Activated CD4-positive, alpha-beta memory T cell treated with anti-CD3 and anti-CD28 coated beads for 36 hours (primary cell): ENCODE measurements at regions of chr6 and their contacts with region 1.

Region 1: GRCh38 chr6:34182751-34183531 is 37.1 kb upstream of the GRM4 start:
- DNase-seq: peak; percentile 87
- H3K4me3 Mint-ChIP-seq: peak overlapping the region; percentile 65
- H3K27ac Mint-ChIP-seq: peak overlapping the region; percentile 81
- H3K4me1 Mint-ChIP-seq: peaks cover 16% of the 10 kb centered on the region
- H3K27me3 Mint-ChIP-seq: no peaks in the 10 kb centered on the region

Region 2: DNA sequence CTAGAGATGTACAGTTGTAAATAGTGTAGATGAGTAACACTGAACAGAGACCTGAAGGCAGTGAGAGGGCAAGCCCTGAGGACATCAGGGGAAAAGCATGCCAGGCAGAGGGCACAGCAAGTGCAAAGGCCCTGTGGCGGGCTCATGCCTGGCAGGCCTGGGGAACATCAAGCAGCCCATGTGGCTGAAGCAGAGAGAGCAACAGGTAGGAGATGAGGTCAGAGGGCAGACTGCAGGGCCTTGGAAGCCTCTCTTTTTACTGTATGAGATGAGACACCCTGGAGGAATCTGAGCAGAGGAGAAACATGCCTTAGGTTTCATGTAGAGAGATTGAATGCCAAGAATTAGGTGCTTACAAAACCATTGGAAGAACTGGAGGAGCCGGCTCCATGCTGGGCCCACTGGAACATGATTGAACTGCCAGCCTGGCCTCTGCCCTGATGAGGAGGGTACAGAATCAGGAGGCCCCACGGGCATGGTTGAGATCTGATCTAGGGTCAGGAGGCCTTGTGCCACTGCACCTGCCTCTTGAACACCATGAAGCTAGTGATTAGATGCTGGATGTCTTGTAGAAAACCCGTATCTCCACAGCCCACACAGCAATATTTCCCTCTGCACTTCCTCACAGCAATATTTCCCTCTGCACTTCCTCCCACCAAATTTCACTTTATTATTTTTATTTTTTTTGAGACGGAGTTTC is 47.9 kb after region 1 on chr6:
- CTCF ChIA-PET with region 1: no interaction called
- POLR2A ChIA-PET with region 1: no interaction called
- intact Hi-C with region 1: no loop called
- DNase-seq: peak; percentile 28
- H3K4me3 Mint-ChIP-seq: no peak overlapping the region
- H3K27ac Mint-ChIP-seq: peak overlapping the region; percentile 33
- H3K4me1 Mint-ChIP-seq: peaks cover 28% of the 10 kb centered on the region
- H3K27me3 Mint-ChIP-seq: no peaks in the 10 kb centered on the region

Region 3: DNA sequence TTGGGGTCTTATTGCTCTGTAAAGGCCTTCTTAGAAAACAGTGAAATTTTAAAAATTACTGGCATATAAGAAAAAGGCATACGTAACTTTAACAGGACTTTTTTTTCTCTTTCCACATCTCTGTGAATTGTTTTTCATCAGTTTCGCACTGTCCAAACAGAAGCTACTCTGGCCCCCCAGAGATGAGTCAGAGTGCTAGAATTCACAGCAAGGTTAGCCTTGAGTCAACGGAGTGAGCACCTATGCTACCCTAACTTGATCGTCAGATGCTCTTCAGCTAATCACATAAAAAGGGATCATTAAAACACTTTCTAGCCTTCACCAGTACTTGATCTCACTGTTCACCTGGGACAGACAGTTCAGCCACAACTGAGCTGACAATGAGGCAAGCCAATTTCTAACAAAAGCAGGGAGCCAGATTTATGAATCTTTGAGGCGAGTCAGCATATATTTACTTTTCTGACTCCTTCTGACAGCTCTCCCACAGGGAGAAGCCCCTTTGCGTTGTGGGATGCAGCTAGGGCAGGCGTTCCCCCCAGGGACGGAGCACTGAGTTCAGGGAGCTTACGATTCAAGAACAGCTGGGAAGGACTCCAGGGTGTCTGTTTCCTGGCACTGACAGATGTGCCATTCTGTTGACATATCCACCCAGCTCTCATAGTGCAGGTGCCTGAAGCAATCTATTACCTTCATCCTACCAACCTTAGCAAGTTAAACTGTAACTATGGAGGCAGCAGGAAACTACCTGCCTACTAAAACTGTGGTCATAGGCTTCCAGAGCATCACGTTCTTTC is 419.6 kb after region 1 on chr6:
- CTCF ChIA-PET with region 1: no interaction called
- POLR2A ChIA-PET with region 1: no interaction called
- intact Hi-C with region 1: loop called (anchors 10 kb)
- DNase-seq: no peak
- H3K4me3 Mint-ChIP-seq: no peak overlapping the region
- H3K27ac Mint-ChIP-seq: no peak overlapping the region
- H3K4me1 Mint-ChIP-seq: peaks cover 28% of the 10 kb centered on the region
- H3K27me3 Mint-ChIP-seq: no peaks in the 10 kb centered on the region